Left colon (tissue), 2 donors: ENCODE measurements at regions of chr14 and their contacts with region 1.

Region 1: DNA sequence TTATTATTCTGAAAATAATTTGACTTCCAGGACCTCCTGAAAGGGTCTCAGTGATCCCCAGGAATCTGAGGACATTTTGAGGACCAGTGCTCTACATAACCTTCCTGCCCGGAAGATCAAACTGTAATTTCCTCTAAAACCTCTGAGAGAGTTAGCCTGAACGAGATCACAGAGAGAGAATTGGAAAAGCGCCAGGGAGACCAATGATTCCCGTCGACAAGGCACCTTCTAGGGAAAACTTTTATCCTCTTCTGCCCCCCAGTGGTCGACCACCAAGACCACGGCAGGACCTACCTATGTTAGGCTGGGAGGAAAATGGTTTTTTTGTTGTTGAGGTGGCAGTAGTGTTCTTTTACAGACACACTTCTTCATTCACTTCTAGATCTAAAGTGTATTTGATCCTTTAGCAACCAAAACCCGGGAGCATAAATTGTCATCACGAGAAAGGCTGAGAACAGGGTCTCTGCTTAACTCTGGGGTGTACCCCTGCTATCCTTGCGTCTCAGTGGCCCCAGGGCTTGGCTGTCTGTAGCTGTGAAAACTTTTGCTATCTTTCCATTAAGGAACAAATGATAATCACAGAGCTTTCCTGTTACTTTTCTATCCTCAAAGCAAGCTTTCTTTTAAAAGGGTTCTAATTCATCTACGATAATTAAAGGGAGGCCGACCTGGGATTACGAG is 62.9 kb upstream of the NID2 start:
- DNase-seq: peak; percentile 80 to 87
- ATAC-seq: peak; percentile 98

Region 2: DNA sequence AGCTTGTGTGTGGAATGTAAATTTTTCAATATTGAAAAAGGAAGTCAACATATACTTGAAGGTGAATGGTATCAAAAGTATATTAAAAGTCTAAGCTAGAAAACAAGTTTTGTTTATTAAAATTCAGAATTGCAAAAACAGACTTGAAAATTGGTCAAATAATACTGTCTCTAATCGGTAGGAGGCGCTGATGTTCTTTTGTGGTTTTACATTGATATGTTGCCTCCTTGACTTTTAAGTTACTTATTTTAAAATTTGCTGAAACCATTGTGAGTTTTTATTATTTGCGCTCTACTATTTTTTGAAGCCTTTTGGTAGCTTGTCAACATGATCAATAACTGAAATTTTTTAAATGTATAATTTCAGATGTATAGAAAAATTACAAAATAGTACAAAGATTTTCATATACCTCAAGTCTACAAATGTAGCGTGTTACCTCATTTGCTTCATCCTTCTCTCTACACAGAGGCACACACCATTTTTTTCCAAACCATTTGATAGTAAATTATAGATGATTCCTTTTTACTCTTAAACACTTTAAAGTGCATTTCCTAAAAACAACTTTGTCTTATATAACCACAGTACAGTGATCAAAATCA is 135.5 kb before region 1 on chr14:
- intact Hi-C with region 1: loop called in 1 of 2 experiments (anchors 2 kb)
- DNase-seq: no peak
- ATAC-seq: peak; percentile 53

Region 3: GRCh38 chr14:52299692-52300278 is 168.0 kb after region 1 on chr14:
- intact Hi-C with region 1: no loop called
- DNase-seq: no peak
- ATAC-seq: peak; percentile 60